AG04449 (cell line): ENCODE measurements at regions of chr7 and their contacts with region 1.

Region 1: DNA sequence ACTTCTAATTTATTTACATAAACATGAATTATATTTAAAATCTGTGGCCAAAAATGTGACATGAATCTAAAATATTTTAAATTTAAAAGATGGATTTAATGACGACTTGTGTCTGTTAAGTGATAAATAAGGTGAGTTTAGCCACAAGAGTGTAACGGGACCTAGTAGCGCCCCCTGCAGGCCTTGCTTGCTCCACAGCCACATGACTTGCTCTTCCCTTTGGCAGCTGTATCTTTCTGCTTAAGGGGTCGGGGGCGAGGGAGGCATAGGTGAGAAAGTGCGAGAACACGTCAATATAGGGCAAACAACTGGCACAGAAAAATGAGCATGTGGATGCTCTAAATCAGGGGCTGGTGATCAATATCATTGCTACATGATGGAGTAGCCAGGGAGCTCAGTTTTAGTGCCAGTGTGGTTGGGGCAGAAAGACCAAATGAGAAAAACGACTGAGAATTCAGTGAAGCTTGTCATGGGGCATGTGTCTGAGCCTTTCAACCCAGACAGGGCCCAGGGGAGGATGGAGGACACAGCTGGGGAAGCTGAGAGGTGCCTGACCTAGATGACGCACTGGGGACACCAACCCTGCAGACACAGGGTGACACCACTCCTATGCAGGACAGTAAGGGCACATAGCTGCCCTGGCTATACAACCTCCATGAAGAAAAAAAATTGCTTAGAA is 49.8 kb downstream of the PAXIP1 start:
- DNase-seq: no peak
- H3K4me3 ChIP-seq: no peak overlapping the region
- CTCF ChIP-seq: peak; percentile 73

Region 2: DNA sequence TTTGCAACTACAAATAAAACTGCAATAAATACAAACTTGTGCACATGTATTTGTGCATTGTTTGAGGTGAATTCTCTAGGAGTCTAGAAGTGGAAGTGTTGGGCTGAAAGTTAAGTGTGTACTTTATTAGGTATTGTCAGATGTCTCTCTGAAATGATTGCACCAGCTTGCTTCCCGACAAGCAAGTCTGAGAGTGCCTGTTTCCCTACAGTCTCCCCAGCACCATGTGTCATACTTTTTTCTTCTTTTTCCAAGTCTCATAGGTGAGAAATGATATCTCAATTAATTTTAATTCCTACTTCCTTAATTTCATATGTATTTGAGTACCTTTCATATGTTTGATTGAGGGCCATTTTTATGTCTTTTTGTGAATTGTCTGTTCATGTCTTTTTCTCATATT is 286.4 kb before region 1 on chr7:
- CTCF ChIA-PET with region 1: no interaction called
- POLR2A ChIA-PET with region 1: no interaction called
- DNase-seq: no peak
- H3K4me3 ChIP-seq: no peak overlapping the region
- CTCF ChIP-seq: no peak

Region 3: DNA sequence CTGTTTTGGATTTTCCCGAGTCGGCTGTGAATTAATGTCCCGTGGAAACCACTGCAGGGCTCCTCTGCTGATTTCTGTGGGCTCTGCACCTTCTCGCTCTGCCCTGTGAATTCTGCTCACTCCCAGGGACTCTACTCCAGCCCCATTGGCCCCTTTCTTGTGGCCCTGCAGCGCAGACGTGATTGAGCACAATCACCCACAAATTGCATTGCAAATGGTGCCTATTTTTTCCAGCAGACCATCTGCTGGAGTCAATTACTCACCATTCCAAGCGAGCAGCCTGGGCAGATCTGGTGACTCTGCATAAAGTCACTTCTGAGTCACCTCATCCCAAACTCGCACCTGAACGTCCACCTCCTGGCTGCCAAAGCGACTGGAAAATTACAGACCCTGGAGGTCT is 186.0 kb before region 1 on chr7:
- CTCF ChIA-PET with region 1: no interaction called
- POLR2A ChIA-PET with region 1: no interaction called
- DNase-seq: no peak
- H3K4me3 ChIP-seq: no peak overlapping the region
- CTCF ChIP-seq: no peak

Region 4: GRCh38 chr7:154937837-154938236 is 15.3 kb before region 1 on chr7:
- CTCF ChIA-PET with region 1: interaction called, 24 read pairs
- POLR2A ChIA-PET with region 1: no interaction called
- DNase-seq: no peak
- H3K4me3 ChIP-seq: no peak overlapping the region
- CTCF ChIP-seq: no peak

Region 5: GRCh38 chr7:155426543-155427410 is 473.6 kb after region 1 on chr7:
- CTCF ChIA-PET with region 1: no interaction called
- POLR2A ChIA-PET with region 1: no interaction called
- DNase-seq: no peak
- H3K4me3 ChIP-seq: no peak overlapping the region
- CTCF ChIP-seq: no peak